ENCODE measurements at regions of chr1 and their contacts with region 1.

Region 1: GRCh38 chr1:202348509-202349205 is at the start of gene PPP1R12B:
- DNase-seq: peak; percentile 98
- H3K4me3 ChIP-seq: peak within 1 kb of the TSS; percentile 73 to 82
- H3K27ac ChIP-seq: peak within 1 kb of the TSS; percentile 80 to 82
- H3K4me1 ChIP-seq: no peaks in the 10 kb centered on the region
- H3K27me3 ChIP-seq: no peaks in the 10 kb centered on the region
- CTCF ChIP-seq: peak in 1 of 4 experiments; percentile 16
- POLR2A ChIP-seq: peak; percentile 57
- total RNA-seq, gene PPP1R12B: 116 to 179 TPM

Region 2: GRCh38 chr1:202405928-202406327 is 57.3 kb after region 1 on chr1:
- intact Hi-C with region 1: loop called (anchors 10 kb)
- DNase-seq: peak; percentile 58
- H3K4me3 ChIP-seq: no peak overlapping the region
- H3K27ac ChIP-seq: peak overlapping the region in 1 of 2 donors; percentile 45
- H3K4me1 ChIP-seq: no peaks in the 10 kb centered on the region
- H3K27me3 ChIP-seq: no peaks in the 10 kb centered on the region
- CTCF ChIP-seq: no peak
- POLR2A ChIP-seq: no peak

Region 3: DNA sequence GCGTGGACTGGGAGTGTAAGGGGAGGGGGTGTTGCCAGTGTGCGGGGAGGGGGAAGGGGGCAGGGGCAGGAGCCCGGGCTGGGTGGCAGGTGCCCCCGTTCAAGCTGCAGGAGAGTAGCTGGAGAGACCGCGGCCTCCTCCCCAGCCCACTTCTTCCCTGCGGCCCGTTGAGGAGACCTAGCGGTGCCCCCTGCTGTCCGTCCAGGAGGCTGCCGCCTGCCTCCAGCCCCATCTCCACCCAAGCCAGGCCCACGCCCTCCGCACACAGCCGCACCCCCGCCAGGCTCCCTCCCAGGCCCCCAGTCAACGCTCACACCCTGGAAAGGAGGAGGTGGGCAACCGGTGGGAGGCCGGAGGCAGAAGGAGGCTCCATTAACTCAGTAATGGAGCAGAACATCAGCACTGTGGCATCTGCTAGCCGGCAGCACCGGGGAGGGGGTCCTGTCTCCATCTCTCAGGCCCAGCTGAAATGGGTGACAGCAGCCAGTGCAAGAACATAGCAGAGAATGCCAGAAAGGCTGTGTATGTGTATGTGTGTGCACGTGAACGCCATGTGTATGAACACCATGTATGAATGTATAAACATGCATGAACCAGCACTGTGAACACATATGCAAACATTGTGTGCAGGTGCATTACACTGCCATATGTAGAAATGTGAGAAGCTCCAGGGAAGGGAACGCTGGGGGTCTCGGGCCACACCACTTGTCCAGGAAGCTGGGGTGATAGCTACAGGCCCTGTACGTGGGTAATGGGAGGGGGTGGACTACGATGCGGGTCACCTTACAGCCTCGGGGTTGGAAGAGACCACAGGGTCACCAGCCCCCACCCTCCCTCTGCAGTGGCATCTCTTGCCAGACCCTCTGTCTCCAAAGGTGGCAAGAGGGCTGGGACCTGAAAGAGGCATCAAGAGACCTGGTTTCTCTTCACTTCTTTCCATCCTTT is 277.0 kb after region 1 on chr1:
- intact Hi-C with region 1: loop called (anchors 10 kb)
- DNase-seq: peak; percentile 32
- H3K4me3 ChIP-seq: no peak overlapping the region
- H3K27ac ChIP-seq: no peak overlapping the region
- H3K4me1 ChIP-seq: no peaks in the 10 kb centered on the region
- H3K27me3 ChIP-seq: no peaks in the 10 kb centered on the region
- CTCF ChIP-seq: peak in 3 of 4 experiments; percentile 41 to 59 (median 58)
- POLR2A ChIP-seq: no peak

Region 4: DNA sequence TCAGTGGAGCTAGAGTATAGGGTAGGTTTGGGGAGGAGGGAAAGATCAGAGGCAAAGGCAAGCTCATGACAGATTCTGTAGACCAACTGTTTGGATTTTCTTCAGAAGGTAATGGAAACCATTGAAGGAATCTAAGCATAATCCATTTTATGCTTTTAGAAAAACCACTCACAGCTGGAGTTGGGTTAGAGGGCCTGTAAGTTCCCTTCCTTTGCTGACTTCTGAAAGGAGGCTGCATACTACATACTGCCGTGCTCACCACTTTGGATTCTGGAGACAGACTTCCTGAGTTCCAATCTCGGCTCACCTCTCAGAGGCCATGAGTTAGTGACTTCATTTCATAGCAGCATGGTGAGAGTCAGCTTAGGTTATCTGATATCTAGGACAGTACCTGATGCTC is 368.0 kb after region 1 on chr1:
- intact Hi-C with region 1: loop called (anchors 5 kb)
- DNase-seq: no peak
- H3K4me3 ChIP-seq: no peak overlapping the region
- H3K27ac ChIP-seq: no peak overlapping the region
- H3K4me1 ChIP-seq: no peaks in the 10 kb centered on the region
- H3K27me3 ChIP-seq: no peaks in the 10 kb centered on the region
- CTCF ChIP-seq: no peak
- POLR2A ChIP-seq: no peak